CD14-positive monocyte (primary cell): ENCODE measurements at regions of chr10 and their contacts with region 1.

Region 1: GRCh38 chr10:63268798-63269503 is 135.8 kb downstream of the NRBF2 start:
- DNase-seq: peak; percentile 96 to 99 (median 97)
- H3K4me3 ChIP-seq: peak overlapping the region; percentile 99 to 100 (median 99)
- H3K4me3 Mint-ChIP-seq: peak overlapping the region; percentile 95 to 97
- H3K27ac ChIP-seq: peak overlapping the region; percentile 80 to 95
- H3K27ac Mint-ChIP-seq: peak overlapping the region; percentile 96 to 99 (median 98)
- H3K4me1 ChIP-seq: peaks cover 18 to 38% of the 10 kb centered on the region in 2 donors
- H3K4me1 Mint-ChIP-seq: peaks cover 16% of the 10 kb centered on the region
- H3K27me3 ChIP-seq: no peaks in the 10 kb centered on the region
- H3K27me3 Mint-ChIP-seq: no peaks in the 10 kb centered on the region
- CTCF ChIP-seq: peak; percentile 27

Region 2: GRCh38 chr10:63320683-63321082 is 51.7 kb after region 1 on chr10:
- intact Hi-C with region 1: loop called in 1 of 2 experiments (anchors 2 kb)
- DNase-seq: no peak
- H3K4me3 ChIP-seq: no peak overlapping the region
- H3K4me3 Mint-ChIP-seq: no peak overlapping the region
- H3K27ac ChIP-seq: no peak overlapping the region
- H3K27ac Mint-ChIP-seq: no peak overlapping the region
- H3K4me1 ChIP-seq: no peaks in the 10 kb centered on the region
- H3K4me1 Mint-ChIP-seq: peaks cover 10% of the 10 kb centered on the region
- H3K27me3 ChIP-seq: no peaks in the 10 kb centered on the region
- H3K27me3 Mint-ChIP-seq: peaks cover 0 to 2% (median 0%) of the 10 kb centered on the region in 3 donors
- CTCF ChIP-seq: no peak

Region 3: DNA sequence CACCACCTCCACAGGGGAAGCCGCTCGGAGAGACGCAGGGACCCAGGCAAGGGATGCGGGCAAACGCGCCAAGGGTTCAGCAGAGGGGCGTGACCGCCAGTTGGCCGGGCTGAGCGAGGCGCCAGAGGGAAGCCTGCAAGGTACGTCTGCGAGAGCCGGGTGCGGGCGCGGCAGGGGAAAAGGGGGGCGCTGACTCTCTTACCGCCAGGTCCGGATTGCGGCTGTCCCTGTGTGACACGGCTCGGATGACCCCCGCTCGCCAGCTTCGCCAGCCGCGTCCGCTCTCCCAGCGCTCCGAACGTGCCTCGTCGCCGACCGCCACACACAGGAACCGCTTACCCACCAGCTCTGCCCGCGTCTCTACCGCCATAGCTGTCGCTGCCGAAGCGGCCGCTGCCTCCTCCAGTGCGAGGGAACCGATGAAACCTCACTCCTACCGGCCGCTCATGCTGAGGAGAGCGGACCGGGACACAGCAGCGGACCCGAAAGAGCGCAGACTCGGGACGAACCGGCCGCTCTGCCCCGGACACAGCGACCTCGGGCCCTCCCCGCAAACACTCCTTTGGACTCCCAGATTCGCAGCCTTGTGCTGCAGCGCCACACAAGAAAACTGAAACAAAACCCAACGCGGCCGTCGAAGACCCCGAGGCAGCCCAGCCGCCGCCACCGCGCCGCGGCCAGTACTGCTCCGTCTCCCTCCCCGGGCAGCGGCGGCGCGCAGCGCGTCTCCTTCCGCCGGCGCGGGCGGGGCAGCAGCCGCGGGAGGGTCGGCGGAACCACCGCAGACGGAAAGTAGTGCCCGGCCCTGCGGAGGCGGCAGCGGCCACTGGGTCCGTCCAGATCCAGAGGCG is 196.6 kb after region 1 on chr10 and contains the start of gene JMJD1C:
- intact Hi-C with region 1: loop called in 1 of 2 experiments (anchors 10 kb)
- DNase-seq: peak; percentile 53 to 65 (median 57)
- H3K4me3 ChIP-seq: peak within 1 kb of the TSS; percentile 95 to 96 (median 96)
- H3K4me3 Mint-ChIP-seq: peak within 1 kb of the TSS; percentile 99
- H3K27ac ChIP-seq: peak within 1 kb of the TSS; percentile 49 to 63
- H3K27ac Mint-ChIP-seq: peak within 1 kb of the TSS; percentile 82 to 95 (median 90)
- H3K4me1 ChIP-seq: peaks cover 12 to 20% of the 10 kb centered on the region in 2 donors
- H3K4me1 Mint-ChIP-seq: peaks cover 25% of the 10 kb centered on the region
- H3K27me3 ChIP-seq: peaks cover 5 to 13% of the 10 kb centered on the region in 2 donors
- H3K27me3 Mint-ChIP-seq: peaks cover 8 to 28% (median 17%) of the 10 kb centered on the region in 3 donors
- CTCF ChIP-seq: no peak
- polyA plus RNA-seq, gene JMJD1C: 27.8 to 84.8 (median 46.5) TPM

Region 4: DNA sequence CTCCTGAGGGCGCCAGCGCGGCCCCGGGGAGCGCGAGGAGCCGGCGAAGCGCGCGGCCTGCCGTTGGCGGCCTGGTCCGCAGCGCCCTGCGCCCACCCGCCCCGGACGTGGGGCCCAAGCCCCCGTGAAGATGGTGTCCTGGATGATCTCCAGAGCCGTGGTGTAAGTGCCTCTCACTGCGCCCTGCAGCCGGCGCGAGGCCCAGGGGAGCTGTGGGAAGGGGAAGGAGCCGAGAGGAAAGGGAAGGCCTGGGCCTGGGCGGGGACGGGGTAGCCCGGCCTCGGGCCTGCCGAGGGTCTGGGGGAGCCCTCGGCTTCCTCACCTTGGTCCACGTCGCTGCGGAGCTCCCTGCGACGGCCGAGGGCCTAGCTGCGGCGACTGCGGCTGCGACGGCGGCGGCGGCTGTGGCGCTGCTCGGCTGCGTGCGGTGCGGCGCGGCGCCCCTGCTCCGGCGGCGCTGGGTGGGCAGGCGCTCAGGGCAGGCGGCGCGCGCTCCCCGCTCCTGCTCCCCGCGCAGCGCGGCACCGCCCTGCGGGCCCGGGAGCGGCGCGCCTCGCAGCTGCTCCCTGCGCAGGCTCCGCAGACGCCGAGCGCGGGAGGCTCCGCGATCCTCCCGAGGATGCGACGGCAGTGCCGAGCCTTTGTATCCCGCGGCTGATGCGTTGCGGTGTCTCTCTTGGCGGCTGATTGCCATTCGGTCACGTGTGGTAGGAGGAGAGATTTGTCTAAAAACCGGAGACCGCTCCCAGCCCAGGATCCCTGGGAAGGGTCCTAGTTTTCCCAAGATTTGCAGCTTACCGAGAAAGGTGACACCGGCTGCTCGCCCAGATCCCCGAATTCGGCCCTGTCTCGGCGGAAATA is 252.7 kb after region 1 on chr10:
- intact Hi-C with region 1: loop called in 1 of 2 experiments (anchors 10 kb)
- DNase-seq: peak; percentile 46 to 63 (median 62)
- H3K4me3 ChIP-seq: peak overlapping the region; percentile 86 to 99 (median 94)
- H3K4me3 Mint-ChIP-seq: peak overlapping the region; percentile 91
- H3K27ac ChIP-seq: peak overlapping the region; percentile 87 to 92
- H3K27ac Mint-ChIP-seq: peak overlapping the region; percentile 73 to 90 (median 86)
- H3K4me1 ChIP-seq: peaks cover 18 to 26% of the 10 kb centered on the region in 2 donors
- H3K4me1 Mint-ChIP-seq: peaks cover 44% of the 10 kb centered on the region
- H3K27me3 ChIP-seq: no peaks in the 10 kb centered on the region
- H3K27me3 Mint-ChIP-seq: no peaks in the 10 kb centered on the region
- CTCF ChIP-seq: no peak

Region 5: DNA sequence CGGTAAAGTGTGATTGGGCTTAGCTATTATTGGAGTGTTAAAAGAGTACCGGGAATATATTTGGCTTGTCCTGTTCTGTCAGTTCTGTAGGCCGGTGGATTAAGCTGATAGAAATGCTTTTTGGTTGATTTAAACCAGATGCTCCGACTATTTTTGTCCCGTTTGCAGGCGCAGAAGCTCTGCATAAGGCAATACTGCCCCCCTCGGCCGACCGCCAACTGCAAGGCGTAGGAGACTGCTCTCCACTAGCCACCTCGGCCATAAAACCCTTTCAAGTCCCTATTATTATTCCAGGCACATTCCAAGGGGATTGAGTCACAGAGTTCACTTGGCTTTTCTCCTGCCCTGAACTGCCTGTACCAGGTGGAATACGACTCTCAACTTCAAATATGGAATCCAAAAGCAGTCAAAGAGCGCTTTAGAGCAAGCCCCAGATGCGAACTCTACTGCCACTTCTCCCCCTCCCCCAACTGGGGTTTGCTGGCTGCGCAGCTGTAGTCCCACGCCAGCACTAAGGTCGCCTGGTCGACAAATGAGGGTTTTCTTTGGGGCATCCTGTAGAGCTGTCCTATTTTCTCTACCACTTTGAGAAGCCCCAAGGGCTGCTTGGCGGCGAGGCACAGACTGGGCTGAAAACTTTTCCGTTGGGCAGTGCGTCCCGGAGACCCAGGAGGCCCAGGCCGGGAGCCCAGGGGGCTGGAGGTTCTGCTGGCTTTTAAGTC is 360.6 kb after region 1 on chr10:
- intact Hi-C with region 1: loop called in 1 of 2 experiments (anchors 5 kb)
- DNase-seq: peak; percentile 55 to 74 (median 70)
- H3K4me3 ChIP-seq: peak overlapping the region; percentile 66 to 85 (median 81)
- H3K4me3 Mint-ChIP-seq: peak overlapping the region; percentile 94 to 95
- H3K27ac ChIP-seq: peak overlapping the region; percentile 84 to 86
- H3K27ac Mint-ChIP-seq: peak overlapping the region; percentile 86 to 96 (median 92)
- H3K4me1 ChIP-seq: peaks cover 42 to 50% of the 10 kb centered on the region in 2 donors
- H3K4me1 Mint-ChIP-seq: peaks cover 47% of the 10 kb centered on the region
- H3K27me3 ChIP-seq: no peaks in the 10 kb centered on the region
- H3K27me3 Mint-ChIP-seq: no peaks in the 10 kb centered on the region
- CTCF ChIP-seq: peak; percentile 87

Region 6: GRCh38 chr10:63700209-63700613 is 431.3 kb after region 1 on chr10:
- intact Hi-C with region 1: loop called (anchors 5 to 10 kb)
- DNase-seq: peak; percentile 53 to 85 (median 75)
- H3K4me3 ChIP-seq: peak overlapping the region in 1 of 3 experiments; percentile 55
- H3K4me3 Mint-ChIP-seq: peak overlapping the region; percentile 21 to 32
- H3K27ac ChIP-seq: peak overlapping the region; percentile 54 to 91
- H3K27ac Mint-ChIP-seq: peak overlapping the region; percentile 87 to 97 (median 93)
- H3K4me1 ChIP-seq: peaks cover 60 to 71% of the 10 kb centered on the region in 2 donors
- H3K4me1 Mint-ChIP-seq: peaks cover 66% of the 10 kb centered on the region
- H3K27me3 ChIP-seq: no peaks in the 10 kb centered on the region
- H3K27me3 Mint-ChIP-seq: peaks cover 0 to 2% (median 1%) of the 10 kb centered on the region in 3 donors
- CTCF ChIP-seq: no peak

Region 7: GRCh38 chr10:63707254-63707910 is 438.4 kb after region 1 on chr10:
- intact Hi-C with region 1: loop called (anchors 5 to 10 kb)
- DNase-seq: peak; percentile 94 to 99 (median 98)
- H3K4me3 ChIP-seq: peak overlapping the region in 1 of 3 experiments; percentile 2
- H3K4me3 Mint-ChIP-seq: no peak overlapping the region
- H3K27ac ChIP-seq: peak overlapping the region in 1 of 2 donors; percentile 75
- H3K27ac Mint-ChIP-seq: peak overlapping the region; percentile 79 to 94 (median 89)
- H3K4me1 ChIP-seq: peaks cover 46 to 58% of the 10 kb centered on the region in 2 donors
- H3K4me1 Mint-ChIP-seq: peaks cover 58% of the 10 kb centered on the region
- H3K27me3 ChIP-seq: no peaks in the 10 kb centered on the region
- H3K27me3 Mint-ChIP-seq: peaks cover 0 to 6% (median 1%) of the 10 kb centered on the region in 3 donors
- CTCF ChIP-seq: no peak